B cell (primary cell): ENCODE measurements at regions of chr9 and their contacts with region 1.

Region 1: GRCh38 chr9:125889476-125890419 is 142.6 kb downstream of the PBX3 start:
- DNase-seq: peak; percentile 69
- ATAC-seq: peak; percentile 81
- H3K4me3 ChIP-seq: peak overlapping the region; percentile 40 to 73 (median 59)
- H3K4me3 Mint-ChIP-seq: peak overlapping the region; percentile 86
- H3K27ac ChIP-seq: no peak overlapping the region
- H3K27ac Mint-ChIP-seq: peak overlapping the region; percentile 4
- H3K4me1 ChIP-seq: peaks cover 10 to 11% of the 10 kb centered on the region in 2 donors
- H3K4me1 Mint-ChIP-seq: peaks cover 24% of the 10 kb centered on the region
- H3K27me3 ChIP-seq: peaks cover 0 to 13% (median 0%) of the 10 kb centered on the region in 4 experiments
- H3K27me3 Mint-ChIP-seq: no peaks in the 10 kb centered on the region
- CTCF ChIP-seq: no peak

Region 2: DNA sequence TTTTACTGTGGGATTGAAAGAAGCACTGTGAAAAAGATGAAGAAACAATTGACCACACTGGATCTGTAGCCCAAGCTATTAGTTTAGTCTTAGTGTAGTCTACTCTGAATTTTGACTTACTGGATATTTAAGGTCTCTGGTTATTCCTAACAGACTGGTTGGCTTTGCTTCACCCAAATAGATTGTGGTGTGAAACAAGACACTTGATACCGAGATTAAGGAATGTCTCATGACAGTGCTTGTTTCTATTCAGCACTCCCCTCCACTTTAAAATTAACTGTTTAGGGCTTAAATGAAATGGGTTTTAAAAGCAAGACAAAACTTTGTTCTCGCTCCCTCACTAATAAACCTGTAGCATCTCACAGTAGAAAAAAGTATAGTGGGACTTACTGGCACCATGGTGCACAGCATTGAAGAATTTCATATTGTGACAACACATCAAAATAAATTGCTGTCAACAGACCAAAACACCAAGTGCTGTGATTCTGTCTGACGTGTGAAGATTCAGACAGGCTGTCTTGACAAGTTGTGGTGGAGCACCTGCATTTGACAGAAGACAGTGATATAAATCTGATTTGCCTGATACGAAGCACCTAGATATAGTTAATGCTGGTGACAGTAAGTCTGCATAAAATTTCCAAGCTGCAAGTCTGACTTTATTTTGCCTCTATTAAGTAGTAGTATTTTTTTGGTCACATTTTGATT is 69.5 kb before region 1 on chr9:
- CTCF ChIA-PET with region 1: no interaction called
- POLR2A ChIA-PET with region 1: interaction called, 4 read pairs
- intact Hi-C with region 1: loop called (anchors 5 kb)
- DNase-seq: peak; percentile 29
- ATAC-seq: no peak
- H3K4me3 ChIP-seq: peak overlapping the region in 1 of 5 experiments; percentile 57
- H3K4me3 Mint-ChIP-seq: peak overlapping the region; percentile 53
- H3K27ac ChIP-seq: peak overlapping the region in 1 of 2 donors; percentile 73
- H3K27ac Mint-ChIP-seq: peak overlapping the region; percentile 65
- H3K4me1 ChIP-seq: peaks cover 25 to 36% of the 10 kb centered on the region in 2 donors
- H3K4me1 Mint-ChIP-seq: peaks cover 35% of the 10 kb centered on the region
- H3K27me3 ChIP-seq: no peaks in the 10 kb centered on the region
- H3K27me3 Mint-ChIP-seq: no peaks in the 10 kb centered on the region
- CTCF ChIP-seq: no peak